Heart right ventricle (tissue), 16 donors: ENCODE measurements at regions of chr10 and their contacts with region 1.

Region 1: DNA sequence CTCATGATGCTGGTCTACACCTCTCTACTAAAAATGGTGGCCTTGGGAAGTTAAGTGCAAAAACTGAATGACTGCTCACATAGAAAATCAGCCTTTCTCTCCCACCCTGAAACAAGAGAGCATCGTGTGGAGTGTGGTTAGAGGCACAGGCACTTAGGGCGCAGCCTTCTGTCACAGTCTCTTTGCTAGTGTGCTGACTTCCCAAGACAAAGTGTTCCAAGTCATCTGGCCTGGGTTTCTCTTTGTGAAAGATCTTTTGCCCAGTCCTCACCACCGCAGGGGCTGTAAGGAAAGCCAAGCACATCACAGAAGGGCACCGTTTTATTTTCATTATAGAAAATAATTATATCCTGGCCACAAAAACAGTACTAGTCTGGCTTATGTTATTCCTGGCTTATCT is 12.5 kb downstream of the STN1 start:
- DNase-seq: no peak
- ATAC-seq: no peak
- H3K4me3 ChIP-seq: no peak overlapping the region
- H3K27ac ChIP-seq: peak overlapping the region in 3 of 10 donors; percentile 24 to 90 (median 29)
- H3K4me1 ChIP-seq: peaks cover 12 to 44% (median 19%) of the 10 kb centered on the region in 9 donors
- H3K27me3 ChIP-seq: no peaks in the 10 kb centered on the region
- CTCF ChIP-seq: no peak

Region 2: DNA sequence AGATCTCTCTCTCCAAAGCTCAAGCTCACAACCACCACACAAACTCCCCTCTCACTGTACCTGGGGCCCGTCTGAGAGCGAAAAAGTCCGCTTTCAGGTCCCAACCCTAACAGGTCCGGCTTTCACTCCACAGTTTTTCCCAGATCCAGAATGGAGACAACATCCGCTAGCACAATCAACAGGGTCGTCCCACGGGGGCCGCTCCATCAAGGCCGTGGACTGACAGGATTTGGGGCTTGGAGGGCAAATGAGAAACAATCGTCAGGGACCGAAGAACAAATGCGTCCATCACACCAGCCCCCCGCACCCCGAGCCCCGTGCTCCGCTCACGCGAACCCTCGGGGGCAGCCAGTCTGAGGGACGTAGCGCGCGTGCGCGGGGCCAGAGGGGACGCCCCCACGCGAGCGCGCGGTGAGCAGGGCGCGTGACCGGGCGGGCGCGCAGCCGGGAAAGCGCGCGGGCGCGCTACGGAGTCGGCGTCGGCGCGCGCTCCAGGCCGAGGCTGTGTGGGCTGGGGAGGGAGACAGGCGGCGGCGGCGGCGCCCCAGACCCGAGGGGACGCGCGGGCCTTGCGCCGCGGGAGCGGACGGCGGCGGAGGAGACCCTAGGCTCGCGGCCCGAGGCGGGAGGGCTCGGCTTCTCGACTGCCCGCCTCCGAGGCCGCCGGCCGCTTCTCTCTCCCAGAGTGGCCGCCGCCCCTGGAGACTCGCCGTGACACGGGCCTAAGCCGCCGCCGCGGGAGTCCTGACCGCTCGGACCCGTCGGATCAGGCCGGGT is 61.4 kb after region 1 on chr10 and contains the start of gene SLK:
- intact Hi-C with region 1: loop called in 1 of 10 experiments (anchors 5 kb)
- DNase-seq: peak; percentile 83 to 89
- ATAC-seq: peak; percentile 95 to 99 (median 96)
- H3K4me3 ChIP-seq: peak within 1 kb of the TSS; percentile 69 to 95 (median 86)
- H3K27ac ChIP-seq: peak within 1 kb of the TSS; percentile 89 to 99 (median 97)
- H3K4me1 ChIP-seq: peaks cover 0 to 47% (median 31%) of the 10 kb centered on the region in 9 donors
- H3K27me3 ChIP-seq: no peaks in the 10 kb centered on the region
- CTCF ChIP-seq: no peak
- total RNA-seq, gene SLK: 30.4 to 63.6 (median 44.2) TPM